Prostate gland (tissue), 2 donors: ENCODE measurements at regions of chr6 and their contacts with region 1.

Region 1: DNA sequence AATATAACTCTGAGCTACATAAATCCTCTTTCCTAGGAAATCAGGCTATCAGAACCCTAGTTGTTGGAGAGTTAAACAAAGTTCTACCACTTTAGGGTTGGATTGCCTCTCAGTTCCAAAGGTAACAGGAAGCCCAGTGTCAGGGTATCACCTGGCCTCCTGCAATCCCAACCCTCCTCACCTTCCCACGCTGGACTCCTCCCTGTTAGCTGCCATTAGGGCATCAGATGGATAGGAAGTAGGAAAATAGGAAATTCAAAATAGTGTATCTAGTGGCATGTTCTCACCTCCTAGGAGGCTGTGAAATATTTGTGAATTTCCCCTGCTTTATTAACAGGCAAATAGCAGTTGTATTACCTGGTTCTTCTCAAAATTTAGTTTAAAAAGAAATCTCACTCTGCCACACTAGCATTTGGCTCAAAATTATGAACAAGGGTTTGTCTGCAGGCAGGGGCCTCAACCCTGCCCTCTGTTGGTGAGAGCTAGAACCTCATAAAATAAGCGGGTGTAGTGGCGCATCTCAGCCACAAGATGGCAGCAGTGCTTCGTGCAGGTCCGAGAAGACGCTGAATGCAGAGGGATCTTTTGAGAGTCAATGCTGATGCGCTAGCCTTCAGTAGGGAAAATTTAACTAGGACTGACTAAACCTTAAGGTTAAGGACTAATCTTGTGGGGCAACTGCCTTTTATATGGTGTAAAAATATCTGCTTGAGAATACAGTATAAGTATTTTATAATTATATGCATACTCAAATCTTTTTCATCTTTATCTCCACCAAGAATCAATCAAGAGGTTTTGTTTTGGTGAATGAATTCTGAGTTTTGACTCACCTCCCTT is 209.8 kb upstream of the KCNQ5 start:
- DNase-seq: peak; percentile 71
- H3K4me3 ChIP-seq: no peak overlapping the region
- H3K27ac ChIP-seq: no peak overlapping the region
- H3K4me1 ChIP-seq: no peaks in the 10 kb centered on the region
- H3K27me3 ChIP-seq: no peaks in the 10 kb centered on the region
- CTCF ChIP-seq: peak; percentile 99 to 100 (median 100)
- POLR2A ChIP-seq: no peak

Region 2: DNA sequence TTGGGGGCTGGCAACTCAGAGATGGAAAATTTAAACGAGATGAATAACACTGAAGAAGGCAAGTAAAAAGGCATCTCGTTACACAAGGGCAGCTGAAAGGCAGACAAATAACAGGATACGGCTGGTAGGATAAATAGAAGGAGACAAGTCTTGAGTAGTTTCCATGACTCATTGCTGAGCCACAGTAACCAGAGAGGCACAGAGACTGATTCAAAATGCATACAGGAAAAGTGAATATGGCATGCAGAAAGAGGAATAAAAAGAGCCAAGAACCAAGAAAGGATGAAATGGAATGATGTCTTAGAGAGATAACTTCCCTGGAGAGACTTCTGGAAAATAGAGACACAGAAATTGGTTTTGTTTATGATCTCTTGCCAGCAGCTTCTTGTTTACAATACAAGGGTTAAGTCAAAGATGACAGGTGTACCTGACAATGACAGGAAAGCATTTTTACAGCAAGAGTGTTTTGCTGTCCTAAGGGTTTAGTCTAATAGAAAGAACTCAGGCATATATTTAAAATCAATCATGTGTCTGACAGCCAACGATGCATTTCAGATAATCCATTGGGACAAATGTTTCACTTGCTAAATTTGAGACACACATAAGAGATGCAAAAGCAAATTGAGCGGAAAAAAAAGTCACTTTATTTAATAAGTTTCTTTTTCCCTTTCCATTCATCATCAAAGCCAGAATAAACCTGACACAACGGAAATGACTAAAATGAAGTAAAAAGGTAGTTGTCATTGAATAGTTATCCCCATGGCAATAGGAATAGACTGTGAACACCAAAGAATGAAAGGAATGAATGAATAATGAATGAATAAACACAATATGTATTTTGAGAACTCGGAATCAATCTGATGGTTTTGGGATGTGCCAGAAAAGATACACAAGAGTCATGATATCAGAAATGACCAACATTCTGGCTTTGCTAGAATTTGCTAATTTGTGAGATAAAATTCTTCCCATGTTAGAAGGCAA is 141.7 kb after region 1 on chr6:
- intact Hi-C with region 1: loop called (anchors 10 kb)
- DNase-seq: no peak
- H3K4me3 ChIP-seq: no peak overlapping the region
- H3K27ac ChIP-seq: no peak overlapping the region
- H3K4me1 ChIP-seq: no peaks in the 10 kb centered on the region
- H3K27me3 ChIP-seq: no peaks in the 10 kb centered on the region
- CTCF ChIP-seq: no peak
- POLR2A ChIP-seq: no peak

Region 3: GRCh38 chr6:72580281-72580940 is 168.3 kb after region 1 on chr6:
- intact Hi-C with region 1: loop called (anchors 1 kb)
- DNase-seq: no peak
- H3K4me3 ChIP-seq: no peak overlapping the region
- H3K27ac ChIP-seq: no peak overlapping the region
- H3K4me1 ChIP-seq: no peaks in the 10 kb centered on the region
- H3K27me3 ChIP-seq: no peaks in the 10 kb centered on the region
- CTCF ChIP-seq: peak in 2 of 4 experiments; percentile 17 to 24
- POLR2A ChIP-seq: no peak

Region 4: DNA sequence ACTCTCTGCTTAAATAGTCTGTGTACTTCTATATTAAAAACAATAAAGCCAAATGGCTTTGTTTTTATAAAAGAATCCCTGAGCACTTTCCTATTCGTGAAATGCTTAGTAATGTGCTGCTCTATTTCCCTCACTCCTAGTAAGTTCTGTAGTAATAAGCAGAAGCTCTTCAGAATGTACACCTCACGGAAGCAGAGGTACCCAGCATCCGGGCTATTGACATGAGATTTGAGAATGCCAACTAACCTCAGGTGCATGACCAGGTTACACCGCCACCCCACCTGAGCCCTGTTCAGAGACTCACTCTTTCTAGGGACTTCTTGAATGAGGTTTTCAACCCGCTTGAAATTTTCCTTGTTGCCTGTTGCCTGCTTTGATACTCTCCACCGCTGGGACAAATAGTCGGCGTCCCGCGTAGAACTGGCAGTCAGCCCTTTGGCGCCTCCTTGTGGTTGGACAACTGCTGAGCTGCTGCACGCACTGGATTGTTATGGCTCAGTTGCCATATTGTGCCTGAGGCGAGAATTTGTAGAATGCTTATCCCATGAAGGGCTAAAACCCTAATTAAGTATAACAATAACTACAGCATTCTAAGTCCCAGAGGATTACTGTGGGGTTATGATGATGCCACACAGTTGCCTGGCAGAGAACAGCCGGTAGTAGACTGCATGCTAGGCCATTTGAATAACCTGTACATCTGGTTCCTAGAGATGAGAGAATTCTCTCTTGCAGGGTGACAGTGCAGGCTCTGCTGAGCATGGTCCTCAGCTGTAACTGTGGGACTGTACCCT is 717.8 kb after region 1 on chr6:
- intact Hi-C with region 1: loop called (anchors 2 kb)
- DNase-seq: peak; percentile 80
- H3K4me3 ChIP-seq: no peak overlapping the region
- H3K27ac ChIP-seq: no peak overlapping the region
- H3K4me1 ChIP-seq: no peaks in the 10 kb centered on the region
- H3K27me3 ChIP-seq: no peaks in the 10 kb centered on the region
- CTCF ChIP-seq: peak; percentile 79 to 91 (median 89)
- POLR2A ChIP-seq: no peak

Region 5: DNA sequence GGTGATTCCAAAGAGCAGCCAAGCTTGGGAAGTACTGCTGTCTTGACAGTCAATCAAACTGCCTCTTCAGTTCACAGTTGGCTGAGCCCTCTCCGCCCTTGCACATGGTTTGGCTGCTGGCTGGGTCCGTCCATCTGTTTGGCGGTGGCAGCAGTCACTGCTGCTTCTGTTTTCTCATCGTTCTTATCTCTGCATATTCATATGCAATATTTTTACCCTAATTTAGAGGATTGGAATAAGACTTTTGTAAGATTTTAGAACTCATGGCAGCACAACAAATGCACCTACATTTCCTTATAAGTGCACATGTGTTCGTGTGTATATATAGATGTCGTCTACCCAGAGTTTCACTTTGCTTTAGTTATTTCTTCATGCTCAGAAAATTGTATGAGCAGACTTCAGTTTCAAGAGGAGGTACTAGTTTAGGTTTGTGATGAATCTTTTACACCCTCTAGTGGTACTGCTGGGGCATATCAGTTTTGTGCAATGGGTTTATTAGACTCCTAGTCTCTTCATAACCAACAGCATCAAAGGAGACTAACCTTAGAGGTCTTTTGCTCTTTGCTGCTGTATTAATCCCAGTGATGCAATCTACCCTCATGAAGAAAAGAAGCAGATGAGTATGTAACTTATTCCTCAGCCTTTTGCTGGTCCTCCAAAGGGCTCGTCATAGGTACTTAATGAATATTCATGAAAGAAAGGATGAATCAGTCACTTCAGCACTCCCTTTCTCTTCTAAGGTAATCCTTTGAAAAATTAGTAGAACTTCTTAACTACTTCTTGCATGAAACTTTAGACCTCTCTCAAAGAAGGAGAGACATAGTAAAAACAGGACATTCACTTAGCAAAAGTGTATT is 768.9 kb after region 1 on chr6:
- intact Hi-C with region 1: loop called (anchors 2 kb)
- DNase-seq: no peak
- H3K4me3 ChIP-seq: no peak overlapping the region
- H3K27ac ChIP-seq: no peak overlapping the region
- H3K4me1 ChIP-seq: no peaks in the 10 kb centered on the region
- H3K27me3 ChIP-seq: no peaks in the 10 kb centered on the region
- CTCF ChIP-seq: peak; percentile 38 to 83 (median 71)
- POLR2A ChIP-seq: no peak